Transverse colon (tissue), 4 donors: ENCODE measurements at regions of chr4 and their contacts with region 1.

Region 1: GRCh38 chr4:87848622-87849351 is 16.0 kb downstream of the MEPE start:
- DNase-seq: peak; percentile 29
- H3K4me3 ChIP-seq: peak overlapping the region in 1 of 4 donors; percentile 14
- H3K27ac ChIP-seq: peak overlapping the region in 1 of 4 donors; percentile 7
- H3K4me1 ChIP-seq: peaks cover 0 to 9% (median 3%) of the 10 kb centered on the region in 4 donors
- H3K27me3 ChIP-seq: no peaks in the 10 kb centered on the region
- CTCF ChIP-seq: peak; percentile 39 to 54 (median 49)
- EP300 ChIP-seq: no peak
- POLR2A ChIP-seq: no peak

Region 2: GRCh38 chr4:87543835-87544461 is 304.8 kb before region 1 on chr4:
- in situ Hi-C with region 1: no loop called
- intact Hi-C with region 1: loop called (anchors 5 kb)
- DNase-seq: no peak
- H3K4me3 ChIP-seq: no peak overlapping the region
- H3K27ac ChIP-seq: no peak overlapping the region
- H3K4me1 ChIP-seq: peaks cover 0 to 9% (median 0%) of the 10 kb centered on the region in 4 donors
- H3K27me3 ChIP-seq: no peaks in the 10 kb centered on the region
- CTCF ChIP-seq: peak in 4 of 5 experiments; percentile 41 to 45 (median 42)
- EP300 ChIP-seq: no peak
- POLR2A ChIP-seq: no peak

Region 3: GRCh38 chr4:87679449-87680169 is 169.2 kb before region 1 on chr4:
- in situ Hi-C with region 1: loop called in 3 of 4 experiments (anchors 5 to 10 kb)
- intact Hi-C with region 1: loop called (anchors 10 kb)
- DNase-seq: peak; percentile 19
- H3K4me3 ChIP-seq: no peak overlapping the region
- H3K27ac ChIP-seq: no peak overlapping the region
- H3K4me1 ChIP-seq: no peaks in the 10 kb centered on the region
- H3K27me3 ChIP-seq: no peaks in the 10 kb centered on the region
- CTCF ChIP-seq: peak; percentile 52 to 77 (median 67)
- EP300 ChIP-seq: no peak
- POLR2A ChIP-seq: no peak

Region 4: GRCh38 chr4:87834401-87834800 is 14.4 kb before region 1 on chr4:
- in situ Hi-C with region 1: no loop called
- intact Hi-C with region 1: no loop called
- DNase-seq: no peak
- H3K4me3 ChIP-seq: no peak overlapping the region
- H3K27ac ChIP-seq: no peak overlapping the region
- H3K4me1 ChIP-seq: no peaks in the 10 kb centered on the region
- H3K27me3 ChIP-seq: no peaks in the 10 kb centered on the region
- CTCF ChIP-seq: no peak
- EP300 ChIP-seq: no peak
- POLR2A ChIP-seq: no peak

Region 5: GRCh38 chr4:88211473-88212252 is 362.9 kb after region 1 on chr4:
- in situ Hi-C with region 1: loop called (anchors 10 to 25 kb)
- intact Hi-C with region 1: no loop called
- DNase-seq: peak; percentile 20
- H3K4me3 ChIP-seq: no peak overlapping the region
- H3K27ac ChIP-seq: no peak overlapping the region
- H3K4me1 ChIP-seq: peaks cover 0 to 3% (median 0%) of the 10 kb centered on the region in 4 donors
- H3K27me3 ChIP-seq: no peaks in the 10 kb centered on the region
- CTCF ChIP-seq: peak; percentile 68 to 80 (median 74)
- EP300 ChIP-seq: no peak
- POLR2A ChIP-seq: no peak

Region 6: DNA sequence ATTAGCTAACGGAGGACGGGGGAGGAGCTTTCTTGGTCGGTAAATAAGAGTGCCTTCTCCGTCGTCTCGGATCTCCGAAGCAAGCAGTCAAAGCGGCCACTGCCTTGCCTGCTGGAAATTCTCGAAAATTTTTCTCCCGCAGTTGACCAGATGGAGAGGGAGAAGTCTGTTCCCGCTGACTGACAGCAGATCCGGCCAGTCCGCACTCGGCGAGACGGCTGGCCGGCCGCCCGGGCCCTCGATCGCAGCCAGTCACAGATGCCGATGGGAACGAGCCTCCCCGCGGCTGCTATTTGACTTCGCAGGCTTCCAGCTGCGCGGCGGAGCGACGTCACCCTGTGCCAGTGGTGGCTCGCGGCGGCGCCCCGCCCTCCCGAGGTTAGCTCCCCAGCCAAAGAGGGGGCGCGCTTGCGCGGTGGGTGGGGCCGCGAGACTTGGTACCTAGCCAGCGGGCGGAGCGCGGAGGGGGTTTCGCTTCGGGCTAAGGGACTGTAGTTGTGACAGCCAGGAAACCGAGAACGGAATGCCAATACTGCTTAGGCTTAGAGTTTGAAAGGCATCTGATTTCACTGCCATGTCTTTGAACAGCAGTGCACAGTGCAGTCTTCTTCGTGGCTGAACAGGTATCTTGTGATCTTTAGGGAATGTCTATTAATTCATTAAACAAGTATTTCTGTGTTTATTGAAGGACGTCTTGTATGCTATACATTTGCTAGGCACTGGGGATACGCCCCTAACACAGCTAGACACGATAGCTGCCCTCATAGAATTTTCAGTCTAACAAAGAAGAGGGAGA is 435.9 kb after region 1 on chr4 and contains the start of gene PPM1K:
- in situ Hi-C with region 1: no loop called
- intact Hi-C with region 1: no loop called
- DNase-seq: peak; percentile 99
- H3K4me3 ChIP-seq: peak within 1 kb of the TSS; percentile 62 to 82 (median 72)
- H3K27ac ChIP-seq: peak within 1 kb of the TSS; percentile 97 to 100 (median 98)
- H3K4me1 ChIP-seq: peaks cover 5 to 23% (median 17%) of the 10 kb centered on the region in 4 donors
- H3K27me3 ChIP-seq: no peaks in the 10 kb centered on the region
- CTCF ChIP-seq: peak in 2 of 5 experiments; percentile 10 to 36
- EP300 ChIP-seq: no peak
- POLR2A ChIP-seq: peak; percentile 85
- total RNA-seq, gene PPM1K: 7.6 to 14.8 (median 9.0) TPM